Cardiac septum (tissue), 1 donor: ENCODE measurements at regions of chr1 and their contacts with region 1.

Region 1: DNA sequence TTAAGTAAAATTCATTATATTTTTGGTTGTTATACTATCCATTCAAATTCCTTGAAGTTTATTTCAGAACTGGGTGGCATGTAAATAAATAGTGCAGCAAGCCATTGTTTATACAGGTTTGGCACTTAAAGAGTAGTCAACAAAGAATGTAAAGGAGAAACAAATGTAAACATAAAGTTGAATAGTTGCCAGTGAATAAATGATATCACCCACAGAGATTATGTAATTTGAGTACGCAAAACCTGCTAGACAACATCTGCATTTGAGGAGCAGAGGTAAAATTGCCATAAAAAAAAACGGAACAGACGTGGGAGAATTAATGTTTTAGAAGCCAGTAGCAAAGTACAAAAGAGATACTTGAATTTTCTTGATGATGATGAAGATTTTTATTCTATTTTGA is 111.6 kb downstream of the ADGRL2 start:
- DNase-seq: no peak

Region 2: DNA sequence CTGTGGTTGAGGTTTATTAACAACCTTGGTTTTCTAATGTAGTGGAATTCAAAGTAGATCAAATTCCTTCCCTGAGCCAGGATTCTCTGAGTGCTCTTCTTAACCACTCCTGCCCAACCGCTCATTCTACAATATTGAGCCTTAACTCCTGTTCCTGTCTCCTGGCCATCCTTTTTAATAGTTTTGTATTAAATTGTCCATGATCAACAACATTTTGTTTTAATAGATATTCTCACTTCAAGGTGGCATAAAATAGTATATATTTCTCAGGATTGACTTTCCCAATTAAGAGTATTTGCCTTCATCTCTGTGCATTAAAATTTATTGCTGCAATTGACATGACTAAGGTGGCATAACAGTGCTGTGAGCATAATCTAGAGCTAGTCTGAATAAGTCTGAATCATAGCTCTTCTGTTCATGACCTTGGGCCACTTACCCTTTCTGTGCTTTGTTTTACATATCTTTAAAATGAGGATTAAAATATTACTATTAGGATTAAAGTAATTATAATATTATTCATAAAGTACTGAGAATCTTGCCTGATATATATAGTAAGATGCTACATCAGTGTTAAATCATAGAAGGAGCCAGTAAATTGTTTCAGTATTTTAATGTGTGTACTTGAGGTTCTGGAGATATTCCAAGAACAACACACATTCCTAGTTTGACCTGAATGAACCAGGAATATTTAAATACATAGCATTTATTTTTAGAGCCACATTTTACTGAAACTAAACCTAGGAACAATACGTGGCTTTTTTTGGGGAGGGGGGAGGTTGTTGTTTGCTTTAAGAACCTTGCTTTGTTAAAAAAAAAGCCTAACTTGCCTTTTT is 35.3 kb before region 1 on chr1:
- intact Hi-C with region 1: loop called (anchors 5 kb)
- DNase-seq: no peak